Mammary epithelial cell (primary cell): ENCODE measurements at regions of chr12 and their contacts with region 1.

Region 1: GRCh38 chr12:40325349-40325960 is 100.7 kb downstream of the LRRK2 start:
- DNase-seq: peak; percentile 28
- H3K4me3 ChIP-seq: no peak overlapping the region
- H3K27ac ChIP-seq: no peak overlapping the region
- H3K4me1 ChIP-seq: peaks cover 6% of the 10 kb centered on the region
- H3K27me3 ChIP-seq: no peaks in the 10 kb centered on the region
- CTCF ChIP-seq: peak; percentile 86

Region 2: DNA sequence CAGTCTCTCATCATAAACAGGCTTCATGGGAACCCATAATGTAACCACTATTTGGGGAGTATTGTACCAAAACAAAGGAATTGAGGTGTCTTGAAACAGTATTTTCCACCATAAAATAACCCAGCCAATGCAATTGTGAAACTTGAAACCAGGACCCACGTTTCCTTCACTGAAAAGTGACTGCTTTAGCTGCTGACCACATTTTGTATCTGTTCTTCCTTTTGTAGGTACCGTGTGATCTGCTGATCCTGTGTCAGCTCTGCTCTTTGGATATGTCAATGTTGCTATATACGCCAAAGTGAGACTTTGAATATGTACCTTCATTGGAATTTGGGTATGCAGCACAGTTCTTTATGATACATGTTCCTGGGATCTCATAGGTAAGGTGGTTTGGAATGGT is 271.7 kb after region 1 on chr12:
- CTCF ChIA-PET with region 1: no interaction called
- dilution Hi-C with region 1: no loop called
- in situ Hi-C with region 1: loop called (anchors 25 kb)
- intact Hi-C with region 1: no loop called
- DNase-seq: no peak
- H3K4me3 ChIP-seq: no peak overlapping the region
- H3K27ac ChIP-seq: no peak overlapping the region
- H3K4me1 ChIP-seq: no peaks in the 10 kb centered on the region
- H3K27me3 ChIP-seq: no peaks in the 10 kb centered on the region
- CTCF ChIP-seq: no peak